Activated CD8-positive, alpha-beta T cell treated with anti-CD3 and anti-CD28 coated beads for 36 hours (primary cell): ENCODE measurements at regions of chr2 and their contacts with region 1.

Region 1: DNA sequence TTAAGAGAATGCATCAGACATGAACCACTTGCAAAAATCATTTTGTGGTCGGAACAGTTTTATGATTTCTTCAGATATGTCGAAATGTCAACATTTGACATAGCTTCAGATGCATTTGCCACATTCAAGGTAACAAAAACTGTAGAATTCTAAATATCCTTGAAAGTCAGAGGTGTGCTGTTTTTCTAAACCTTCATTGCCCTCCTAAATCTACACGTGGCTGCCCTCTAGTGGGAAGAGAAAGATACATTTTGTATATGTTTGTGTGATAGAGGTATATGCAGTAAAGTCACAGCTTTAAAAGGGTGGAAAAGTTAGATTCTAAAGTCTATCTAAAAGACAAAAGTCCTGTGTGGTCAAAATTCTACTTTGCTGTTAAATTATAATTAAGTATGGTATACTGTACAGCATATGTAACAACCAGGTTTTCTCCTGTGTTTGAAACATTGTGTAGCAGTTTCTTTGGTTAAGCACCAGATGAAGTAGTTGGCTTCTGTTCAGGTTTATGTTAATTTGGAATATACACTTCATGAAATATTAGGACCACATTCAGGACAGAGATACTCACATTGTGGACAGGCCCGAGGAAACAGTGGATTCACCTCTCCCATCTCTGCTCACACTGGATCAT is 65.9 kb upstream of the ITM2C start:
- DNase-seq: peak; percentile 58
- ATAC-seq: no peak
- H3K4me3 Mint-ChIP-seq: no peak overlapping the region
- H3K27ac Mint-ChIP-seq: peak overlapping the region; percentile 69
- H3K4me1 Mint-ChIP-seq: peaks cover 16% of the 10 kb centered on the region
- H3K27me3 Mint-ChIP-seq: no peaks in the 10 kb centered on the region
- CTCF ChIP-seq: peak; percentile 93

Region 2: GRCh38 chr2:230441227-230441897 is 357.5 kb before region 1 on chr2:
- CTCF ChIA-PET with region 1: no interaction called
- POLR2A ChIA-PET with region 1: no interaction called
- intact Hi-C with region 1: loop called (anchors 10 kb)
- DNase-seq: peak; percentile 82
- ATAC-seq: peak; percentile 87
- H3K4me3 Mint-ChIP-seq: peak overlapping the region; percentile 43
- H3K27ac Mint-ChIP-seq: peak overlapping the region; percentile 89
- H3K4me1 Mint-ChIP-seq: peaks cover 61% of the 10 kb centered on the region
- H3K27me3 Mint-ChIP-seq: no peaks in the 10 kb centered on the region
- CTCF ChIP-seq: no peak

Region 3: GRCh38 chr2:230668184-230668938 is 130.5 kb before region 1 on chr2:
- CTCF ChIA-PET with region 1: interaction called, 6 read pairs
- POLR2A ChIA-PET with region 1: interaction called, 4 read pairs
- intact Hi-C with region 1: loop called (anchors 2 kb)
- DNase-seq: peak; percentile 67
- ATAC-seq: peak; percentile 32
- H3K4me3 Mint-ChIP-seq: peak overlapping the region; percentile 40
- H3K27ac Mint-ChIP-seq: peak overlapping the region; percentile 88
- H3K4me1 Mint-ChIP-seq: peaks cover 69% of the 10 kb centered on the region
- H3K27me3 Mint-ChIP-seq: no peaks in the 10 kb centered on the region
- CTCF ChIP-seq: no peak

Region 4: GRCh38 chr2:230731512-230731911 is 67.4 kb before region 1 on chr2:
- CTCF ChIA-PET with region 1: interaction called, 10 read pairs
- POLR2A ChIA-PET with region 1: no interaction called
- intact Hi-C with region 1: no loop called
- DNase-seq: no peak
- ATAC-seq: no peak
- H3K4me3 Mint-ChIP-seq: no peak overlapping the region
- H3K27ac Mint-ChIP-seq: no peak overlapping the region
- H3K4me1 Mint-ChIP-seq: peaks cover 72% of the 10 kb centered on the region
- H3K27me3 Mint-ChIP-seq: no peaks in the 10 kb centered on the region
- CTCF ChIP-seq: no peak

Region 5: GRCh38 chr2:230774348-230774951 is 24.4 kb before region 1 on chr2:
- CTCF ChIA-PET with region 1: interaction called, 13 read pairs
- POLR2A ChIA-PET with region 1: interaction called, 5 read pairs
- intact Hi-C with region 1: no loop called
- DNase-seq: no peak
- ATAC-seq: no peak
- H3K4me3 Mint-ChIP-seq: no peak overlapping the region
- H3K27ac Mint-ChIP-seq: no peak overlapping the region
- H3K4me1 Mint-ChIP-seq: peaks cover 84% of the 10 kb centered on the region
- H3K27me3 Mint-ChIP-seq: no peaks in the 10 kb centered on the region
- CTCF ChIP-seq: no peak

Region 6: DNA sequence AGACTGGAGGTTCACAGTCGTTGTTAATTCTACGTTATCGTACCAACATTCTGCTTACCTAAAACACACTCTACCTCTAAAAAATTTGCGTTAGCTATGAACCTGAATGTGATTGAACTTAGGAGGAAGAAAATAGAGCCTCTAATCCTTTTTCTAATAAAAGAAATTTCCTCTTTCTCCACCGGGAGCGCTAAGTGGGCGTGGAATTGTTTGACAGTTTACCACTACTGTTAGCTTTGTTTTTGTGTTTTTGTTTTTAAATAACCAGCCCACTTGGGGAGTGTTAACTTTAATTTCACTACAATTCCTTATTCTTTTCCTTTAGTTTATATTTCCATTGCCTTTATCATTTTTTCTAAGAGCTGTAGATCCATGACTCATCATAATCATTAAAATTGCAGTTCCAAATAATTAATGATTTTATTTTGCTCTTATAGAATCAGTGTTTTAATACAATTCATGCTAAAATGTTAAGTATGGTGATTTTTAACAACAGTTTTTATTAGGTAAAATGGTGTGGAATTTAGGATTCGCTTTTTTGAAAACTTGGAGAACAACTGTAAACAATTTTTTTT is 10.9 kb after region 1 on chr2:
- CTCF ChIA-PET with region 1: interaction called, 25 read pairs
- POLR2A ChIA-PET with region 1: interaction called, 3 read pairs
- intact Hi-C with region 1: no loop called
- DNase-seq: no peak
- ATAC-seq: no peak
- H3K4me3 Mint-ChIP-seq: no peak overlapping the region
- H3K27ac Mint-ChIP-seq: no peak overlapping the region
- H3K4me1 Mint-ChIP-seq: peaks cover 17% of the 10 kb centered on the region
- H3K27me3 Mint-ChIP-seq: no peaks in the 10 kb centered on the region
- CTCF ChIP-seq: peak; percentile 24